RWPE1 (cell line): ENCODE measurements at regions of chr18 and their contacts with region 1.

Region 1: DNA sequence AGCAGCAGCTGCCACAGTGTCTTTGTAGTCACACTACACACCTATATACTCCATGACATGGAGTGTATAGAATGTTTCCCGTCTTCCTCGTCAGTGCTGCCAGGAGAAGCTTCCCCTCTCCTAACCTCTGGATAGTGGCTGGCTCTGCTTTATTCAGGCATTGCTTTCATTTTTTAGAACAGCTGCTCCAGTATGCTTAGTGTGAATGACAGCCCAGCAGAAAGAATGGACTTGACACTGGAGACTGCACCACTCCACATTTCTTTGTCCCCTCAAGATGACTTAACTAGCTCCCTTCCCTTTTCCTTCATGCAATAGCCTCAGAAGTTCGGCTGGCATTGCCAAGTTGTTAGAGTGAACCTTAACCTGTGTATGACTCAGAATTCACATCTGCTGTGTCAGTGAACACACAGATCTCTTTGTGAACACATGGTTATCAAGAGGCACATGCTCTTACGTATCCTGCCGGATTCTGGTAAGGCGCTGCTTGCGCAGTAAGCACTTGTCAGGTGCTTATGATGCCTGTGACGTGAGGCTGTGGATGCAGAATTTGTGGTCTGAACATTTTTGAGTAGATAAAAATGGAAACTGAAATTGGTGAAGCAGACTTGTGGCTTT is 73.9 kb downstream of the NEDD4L start:
- DNase-seq: peak; percentile 47
- H3K27ac ChIP-seq: no peak overlapping the region
- CTCF ChIP-seq: no peak

Region 2: DNA sequence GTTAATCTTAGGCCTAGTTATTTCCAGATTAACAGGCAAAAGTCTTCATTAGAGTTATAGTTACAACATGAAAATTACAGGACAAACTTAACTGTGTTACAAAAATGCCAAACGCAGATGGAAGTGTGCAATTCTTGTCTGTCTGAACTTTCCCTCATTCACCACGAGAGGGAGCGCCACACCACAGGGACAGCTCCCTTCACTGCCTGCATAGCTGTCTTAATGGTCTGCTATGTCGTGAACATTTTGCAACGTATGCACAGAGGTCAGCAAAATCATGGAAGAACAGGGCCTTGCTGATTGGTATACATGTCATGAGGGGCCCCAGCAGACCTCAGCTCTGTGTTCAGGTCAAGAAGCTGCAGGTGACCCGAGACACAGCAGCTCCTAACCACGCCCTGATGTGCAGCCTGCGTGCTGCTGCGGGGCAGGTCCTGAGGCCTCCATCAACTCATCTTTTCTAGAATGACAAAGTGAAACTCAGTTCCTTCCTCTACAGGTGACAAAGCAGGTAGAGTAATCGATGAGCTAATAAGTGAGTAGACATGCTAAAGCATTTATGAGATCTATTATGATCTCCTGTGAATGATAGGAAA is 236.0 kb before region 1 on chr18:
- CTCF ChIA-PET with region 1: interaction called, 13 read pairs
- POLR2A ChIA-PET with region 1: no interaction called
- DNase-seq: peak; percentile 41
- H3K27ac ChIP-seq: no peak overlapping the region
- CTCF ChIP-seq: peak; percentile 90

Region 3: GRCh38 chr18:57910817-57911216 is 207.1 kb before region 1 on chr18:
- CTCF ChIA-PET with region 1: no interaction called
- POLR2A ChIA-PET with region 1: no interaction called
- DNase-seq: no peak
- H3K27ac ChIP-seq: no peak overlapping the region
- CTCF ChIP-seq: peak; percentile 18; the same call in 1 of the 2 replicates

Region 4: GRCh38 chr18:58043491-58044379 is 74.2 kb before region 1 on chr18 and contains the start of gene NEDD4L:
- CTCF ChIA-PET with region 1: interaction called, 12 read pairs
- POLR2A ChIA-PET with region 1: interaction called, 3 read pairs
- DNase-seq: peak; percentile 64
- H3K27ac ChIP-seq: peak within 1 kb of the TSS; percentile 90
- CTCF ChIP-seq: peak; percentile 89

Region 5: DNA sequence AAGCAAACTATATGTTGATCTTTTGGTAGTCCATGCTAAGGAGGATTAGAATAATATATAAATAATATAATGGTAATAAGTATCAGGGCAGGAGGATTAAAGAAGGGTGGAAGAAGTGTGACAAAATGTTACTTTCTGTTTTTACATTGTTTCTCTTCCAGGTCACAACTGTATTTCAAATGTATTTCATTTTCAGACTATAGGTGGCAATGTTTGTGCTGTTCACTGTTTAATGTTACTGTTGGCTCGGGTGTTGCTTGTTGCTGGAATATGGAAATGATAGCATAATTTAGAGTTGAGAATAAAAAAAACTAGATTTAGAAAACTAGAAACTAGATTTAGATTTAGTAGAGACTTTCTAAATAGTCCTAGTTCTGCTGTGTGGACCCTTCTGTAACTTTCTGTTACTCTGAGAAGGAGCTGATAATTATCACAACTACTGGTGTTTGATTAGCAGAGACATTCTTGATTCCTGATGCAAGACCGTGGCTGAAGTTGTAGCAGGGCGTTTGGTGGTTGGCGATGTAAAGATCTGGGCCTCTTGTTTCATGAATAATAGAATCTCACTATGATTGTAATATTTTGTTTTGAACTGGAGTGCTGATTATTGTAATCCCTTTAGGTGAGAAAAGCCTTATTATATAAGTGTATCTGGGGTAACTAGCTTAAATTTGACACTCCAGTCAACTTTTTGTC is 66.0 kb before region 1 on chr18:
- CTCF ChIA-PET with region 1: interaction called, 10 read pairs
- POLR2A ChIA-PET with region 1: no interaction called
- DNase-seq: peak; percentile 20
- H3K27ac ChIP-seq: no peak overlapping the region
- CTCF ChIP-seq: peak; percentile 33

Region 6: DNA sequence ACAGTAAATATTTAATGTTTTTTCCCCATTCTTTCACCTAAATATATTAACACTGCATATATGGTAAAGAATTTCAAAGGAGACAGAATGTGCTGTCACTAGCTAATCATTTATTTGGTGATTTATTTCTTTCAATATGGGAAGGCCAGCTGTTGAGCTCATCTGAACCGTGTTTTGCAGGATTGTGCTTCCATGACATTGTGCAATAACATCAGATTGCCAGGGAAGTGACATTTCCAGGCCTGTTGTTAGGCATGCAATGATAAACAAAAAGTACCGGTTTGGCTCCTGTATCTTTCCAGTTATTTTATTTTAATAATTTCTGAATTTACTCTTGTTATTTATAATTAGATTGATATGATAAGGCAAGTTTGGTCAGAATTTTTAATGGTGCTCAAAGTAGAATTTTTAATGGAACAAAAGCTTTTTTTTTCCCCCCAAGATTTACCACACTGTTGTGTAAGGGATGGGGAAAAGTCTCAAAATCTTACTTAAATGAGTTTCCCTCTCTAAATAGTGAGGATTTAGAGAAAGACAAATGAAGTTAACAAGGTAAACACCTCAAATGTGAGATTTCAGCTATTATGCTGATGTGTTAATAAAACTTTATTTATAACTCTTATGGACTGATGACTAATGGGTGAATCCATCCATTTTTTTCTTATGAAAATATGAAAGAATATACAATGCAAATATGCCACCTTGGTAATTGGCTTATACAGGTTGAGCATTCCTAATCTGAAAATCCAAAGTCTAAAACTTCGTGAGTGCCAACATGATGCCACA is 606.1 kb after region 1 on chr18:
- CTCF ChIA-PET with region 1: no interaction called
- POLR2A ChIA-PET with region 1: no interaction called
- DNase-seq: no peak
- H3K27ac ChIP-seq: no peak overlapping the region
- CTCF ChIP-seq: no peak